Activated T-helper 1 cell treated with anti-CD3 and anti-CD28 coated beads, Interleukin-12 subunit alpha, Interleukin-12 subunit beta, Interleukin-2, Interleukin-4 antibody, amounts not matched to agents 30 ng/mL and 10 ng/mL and 1 ng/mL, durations not matched to agents 14 hours and 24 hours and 36 hours (primary cell): ENCODE measurements at regions of chr17 and their contacts with region 1.

Region 1: GRCh38 chr17:78818932-78819331 is 21.7 kb downstream of the USP36 start:
- DNase-seq: peak; percentile 64
- H3K4me3 Mint-ChIP-seq: peak overlapping the region; percentile 74
- H3K27ac Mint-ChIP-seq: peak overlapping the region; percentile 91
- H3K4me1 Mint-ChIP-seq: peaks cover 53% of the 10 kb centered on the region
- H3K27me3 Mint-ChIP-seq: no peaks in the 10 kb centered on the region

Region 2: GRCh38 chr17:77990301-77990700 is 828.6 kb before region 1 on chr17:
- intact Hi-C with region 1: no loop called
- DNase-seq: no peak
- H3K4me3 Mint-ChIP-seq: no peak overlapping the region
- H3K27ac Mint-ChIP-seq: no peak overlapping the region
- H3K4me1 Mint-ChIP-seq: no peaks in the 10 kb centered on the region
- H3K27me3 Mint-ChIP-seq: peaks cover 2% of the 10 kb centered on the region

Region 3: DNA sequence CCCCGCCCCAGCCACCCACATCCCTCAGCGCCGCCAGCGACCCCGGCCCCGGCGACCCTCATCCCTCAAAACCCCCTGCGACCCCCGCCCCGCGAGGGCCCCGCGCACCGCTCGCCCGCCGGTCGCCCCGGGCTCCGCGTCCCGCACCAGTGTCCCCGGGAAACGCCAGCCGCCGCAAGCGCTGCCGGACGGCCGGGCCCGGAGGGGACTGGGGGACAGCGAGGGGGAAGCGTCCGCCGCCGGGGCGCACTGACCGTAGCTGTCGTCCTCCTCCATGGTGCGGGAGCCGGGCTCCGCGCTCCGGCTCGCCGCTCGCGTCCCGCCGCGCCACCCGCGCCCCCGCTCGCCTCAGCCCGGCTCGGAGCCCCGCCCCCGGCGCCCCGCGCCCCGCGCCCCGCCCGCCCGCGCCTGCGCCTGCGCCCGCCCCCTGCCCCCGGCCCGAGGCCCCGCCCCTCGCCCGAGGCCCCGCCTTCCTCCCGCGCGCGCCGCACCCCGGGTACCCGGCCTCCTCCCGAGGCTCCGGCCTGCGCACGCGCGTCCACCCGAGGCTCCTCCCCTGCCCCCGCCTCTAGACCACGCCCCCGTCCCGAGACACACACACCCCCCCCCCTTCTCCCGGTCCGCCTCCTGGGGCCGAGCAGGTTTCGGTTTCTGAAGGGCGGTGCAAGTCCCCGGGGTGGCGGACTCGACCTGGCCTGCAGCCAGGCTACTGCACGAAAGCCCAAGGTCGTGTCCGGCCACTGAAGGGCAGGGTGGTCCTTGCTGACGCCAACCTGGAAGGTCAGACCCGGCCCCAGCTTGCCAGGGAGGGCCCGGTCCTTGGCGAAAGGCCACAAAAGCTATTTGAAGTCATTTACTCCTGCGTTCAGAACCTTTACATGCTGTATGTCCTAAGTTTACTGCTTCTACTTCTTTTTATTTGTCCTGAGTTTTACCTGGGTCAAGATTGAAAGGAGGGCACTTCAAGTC is 36.7 kb before region 1 on chr17 and contains the start of gene CYTH1:
- intact Hi-C with region 1: loop called (anchors 2 kb)
- DNase-seq: peak; percentile 96
- H3K4me3 Mint-ChIP-seq: peak within 1 kb of the TSS; percentile 90
- H3K27ac Mint-ChIP-seq: peak within 1 kb of the TSS; percentile 91
- H3K4me1 Mint-ChIP-seq: peaks cover 51% of the 10 kb centered on the region
- H3K27me3 Mint-ChIP-seq: no peaks in the 10 kb centered on the region
- total RNA-seq, gene CYTH1: 147 TPM in 2 replicates